ENCODE measurements at regions of chr10 and their contacts with region 1.

Region 1: DNA sequence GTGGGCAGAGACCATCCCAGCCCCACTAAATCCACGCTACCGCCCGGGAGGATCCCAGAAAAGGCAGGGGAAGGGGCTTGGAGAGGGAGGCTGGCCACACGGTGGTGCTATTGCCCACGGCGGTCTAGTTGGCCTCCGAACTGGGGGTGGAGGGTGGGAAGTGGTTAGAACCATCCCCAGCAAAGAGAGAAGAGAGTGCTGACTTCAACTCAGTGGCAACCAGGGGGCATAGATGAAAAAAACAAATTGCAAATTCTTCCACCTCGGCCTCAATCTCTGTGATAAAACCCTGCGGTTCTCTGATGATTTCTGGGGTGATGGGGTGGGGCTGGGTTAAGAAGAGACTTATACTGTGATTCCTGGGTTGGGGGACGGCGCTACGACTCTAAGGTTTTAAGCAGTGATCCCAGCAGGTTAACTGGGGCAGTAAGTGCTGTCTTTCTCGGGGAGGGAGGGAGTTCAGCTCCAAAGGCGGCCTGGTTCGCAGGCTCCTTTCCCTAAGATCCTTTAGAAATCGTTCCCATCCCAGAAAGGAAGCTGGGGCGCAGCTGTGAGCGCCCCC is 154.5 kb upstream of the LYZL2 start:
- DNase-seq: peak; percentile 80 to 83 (median 82)
- H3K4me3 ChIP-seq: peak overlapping the region; percentile 30 to 53
- H3K4me3 Mint-ChIP-seq: peak overlapping the region; percentile 74 to 92 (median 86)
- H3K27ac ChIP-seq: peak overlapping the region; percentile 12
- H3K27ac Mint-ChIP-seq: peak overlapping the region; percentile 28 to 95 (median 83)
- H3K4me1 ChIP-seq: peaks cover 28% of the 10 kb centered on the region
- H3K4me1 Mint-ChIP-seq: peaks cover 7 to 33% (median 20%) of the 10 kb centered on the region in 4 donors
- H3K27me3 ChIP-seq: no peaks in the 10 kb centered on the region
- H3K27me3 Mint-ChIP-seq: no peaks in the 10 kb centered on the region

Region 2: GRCh38 chr10:30476511-30477155 is 307.4 kb before region 1 on chr10:
- CTCF ChIA-PET with region 1: no interaction called
- POLR2A ChIA-PET with region 1: no interaction called
- intact Hi-C with region 1: no loop called
- DNase-seq: no peak
- H3K4me3 ChIP-seq: no peak overlapping the region
- H3K4me3 Mint-ChIP-seq: no peak overlapping the region
- H3K27ac ChIP-seq: no peak overlapping the region
- H3K27ac Mint-ChIP-seq: peak overlapping the region in 1 of 7 donors; percentile 48
- H3K4me1 ChIP-seq: no peaks in the 10 kb centered on the region
- H3K4me1 Mint-ChIP-seq: peaks cover 0 to 9% (median 6%) of the 10 kb centered on the region in 4 donors
- H3K27me3 ChIP-seq: no peaks in the 10 kb centered on the region
- H3K27me3 Mint-ChIP-seq: no peaks in the 10 kb centered on the region

Region 3: DNA sequence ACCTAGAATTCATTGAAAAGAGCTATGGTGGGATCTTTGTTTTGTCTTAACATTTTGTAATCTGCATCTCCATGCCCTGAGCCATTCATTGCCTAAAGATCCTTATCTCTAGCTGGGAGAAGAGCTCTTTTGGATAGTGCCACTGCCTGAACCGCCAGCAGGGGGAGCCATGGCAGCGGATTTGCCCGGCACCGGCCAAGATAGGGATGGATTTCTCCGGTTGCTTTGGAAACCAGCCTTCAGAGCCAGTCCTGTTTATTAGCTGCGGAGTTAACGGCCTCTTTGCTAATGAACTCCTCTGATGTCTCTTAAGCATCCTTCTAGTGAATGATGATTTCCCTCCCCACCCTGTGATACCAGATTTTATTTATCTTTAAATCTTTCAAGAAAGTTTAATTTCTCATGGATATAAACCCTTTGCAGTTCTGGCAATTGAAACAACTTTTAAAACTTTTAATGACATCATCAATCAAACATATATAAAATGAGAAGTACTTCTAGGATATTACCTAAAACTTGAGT is 96.3 kb before region 1 on chr10:
- CTCF ChIA-PET with region 1: interaction called, 11 read pairs
- POLR2A ChIA-PET with region 1: no interaction called
- intact Hi-C with region 1: no loop called
- DNase-seq: peak; percentile 59 to 76 (median 66)
- H3K4me3 ChIP-seq: no peak overlapping the region
- H3K4me3 Mint-ChIP-seq: no peak overlapping the region
- H3K27ac ChIP-seq: no peak overlapping the region
- H3K27ac Mint-ChIP-seq: peak overlapping the region in 1 of 7 donors; percentile 29
- H3K4me1 ChIP-seq: no peaks in the 10 kb centered on the region
- H3K4me1 Mint-ChIP-seq: peaks cover 0 to 3% (median 0%) of the 10 kb centered on the region in 4 donors
- H3K27me3 ChIP-seq: no peaks in the 10 kb centered on the region
- H3K27me3 Mint-ChIP-seq: peaks cover 9 to 29% of the 10 kb centered on the region in 2 donors

Region 4: DNA sequence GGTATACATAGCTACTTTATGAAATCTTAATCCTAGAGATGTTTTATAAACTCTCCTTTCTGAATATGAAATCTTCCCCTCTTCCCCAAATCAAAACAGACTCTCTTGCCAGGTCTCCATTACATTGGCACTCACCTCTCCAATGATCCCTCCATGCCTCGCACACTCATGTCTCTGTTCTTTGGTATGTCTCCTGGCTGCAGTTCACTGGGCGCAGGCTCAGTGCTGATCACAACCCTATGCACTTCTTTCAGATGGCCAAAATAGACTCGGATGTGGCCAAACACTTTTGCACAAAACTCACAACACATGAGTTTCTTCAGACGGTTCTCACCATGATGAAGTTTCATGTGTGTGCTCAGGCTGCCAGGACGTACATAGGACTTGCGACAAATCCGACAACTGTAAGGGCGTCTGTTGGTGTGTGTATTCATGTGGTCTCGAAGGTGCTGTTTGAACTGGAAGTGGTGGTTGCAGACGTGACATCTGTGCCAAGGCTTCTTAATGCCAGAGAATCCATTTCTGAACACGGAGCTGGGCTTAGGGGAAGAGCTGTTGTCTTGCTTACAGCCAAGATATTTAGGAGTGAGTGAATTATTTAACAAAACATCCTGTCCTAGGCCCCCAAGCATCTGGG is 64.5 kb after region 1 on chr10:
- CTCF ChIA-PET with region 1: interaction called, 30 read pairs
- POLR2A ChIA-PET with region 1: interaction called, 10 read pairs
- intact Hi-C with region 1: loop called (anchors 1 kb)
- DNase-seq: no peak
- H3K4me3 ChIP-seq: no peak overlapping the region
- H3K4me3 Mint-ChIP-seq: no peak overlapping the region
- H3K27ac ChIP-seq: no peak overlapping the region
- H3K27ac Mint-ChIP-seq: peak overlapping the region in 1 of 7 donors; percentile 73
- H3K4me1 ChIP-seq: no peaks in the 10 kb centered on the region
- H3K4me1 Mint-ChIP-seq: no peaks in the 10 kb centered on the region
- H3K27me3 ChIP-seq: no peaks in the 10 kb centered on the region
- H3K27me3 Mint-ChIP-seq: no peaks in the 10 kb centered on the region

Region 5: GRCh38 chr10:31031558-31032257 is 247.7 kb after region 1 on chr10 and contains the start of gene ZNF438:
- CTCF ChIA-PET with region 1: interaction called, 27 read pairs
- POLR2A ChIA-PET with region 1: interaction called, 40 read pairs
- intact Hi-C with region 1: loop called (anchors 1 kb)
- DNase-seq: peak in 4 of 5 donors; percentile 96 to 98 (median 96)
- H3K4me3 ChIP-seq: peak within 1 kb of the TSS; percentile 77 to 96
- H3K4me3 Mint-ChIP-seq: peak within 1 kb of the TSS; percentile 86 to 93 (median 90)
- H3K27ac ChIP-seq: peak within 1 kb of the TSS; percentile 92
- H3K27ac Mint-ChIP-seq: peak within 1 kb of the TSS; percentile 98 to 99 (median 99)
- H3K4me1 ChIP-seq: peaks cover 13% of the 10 kb centered on the region
- H3K4me1 Mint-ChIP-seq: peaks cover 9 to 25% (median 15%) of the 10 kb centered on the region in 4 donors
- H3K27me3 ChIP-seq: no peaks in the 10 kb centered on the region
- H3K27me3 Mint-ChIP-seq: no peaks in the 10 kb centered on the region
- total RNA-seq, gene ZNF438: 3.7 to 4.1 TPM

Region 6: GRCh38 chr10:31353574-31353973 is 569.6 kb after region 1 on chr10:
- CTCF ChIA-PET with region 1: interaction called, 3 read pairs
- POLR2A ChIA-PET with region 1: no interaction called
- intact Hi-C with region 1: loop called (anchors 1 kb)
- DNase-seq: peak; percentile 14 to 40 (median 21)
- H3K4me3 ChIP-seq: no peak overlapping the region
- H3K4me3 Mint-ChIP-seq: no peak overlapping the region
- H3K27ac ChIP-seq: no peak overlapping the region
- H3K27ac Mint-ChIP-seq: peak overlapping the region in 2 of 7 donors; percentile 2 to 30
- H3K4me1 ChIP-seq: peaks cover 37% of the 10 kb centered on the region
- H3K4me1 Mint-ChIP-seq: peaks cover 39 to 67% (median 51%) of the 10 kb centered on the region in 4 donors
- H3K27me3 ChIP-seq: no peaks in the 10 kb centered on the region
- H3K27me3 Mint-ChIP-seq: no peaks in the 10 kb centered on the region

Region 7: DNA sequence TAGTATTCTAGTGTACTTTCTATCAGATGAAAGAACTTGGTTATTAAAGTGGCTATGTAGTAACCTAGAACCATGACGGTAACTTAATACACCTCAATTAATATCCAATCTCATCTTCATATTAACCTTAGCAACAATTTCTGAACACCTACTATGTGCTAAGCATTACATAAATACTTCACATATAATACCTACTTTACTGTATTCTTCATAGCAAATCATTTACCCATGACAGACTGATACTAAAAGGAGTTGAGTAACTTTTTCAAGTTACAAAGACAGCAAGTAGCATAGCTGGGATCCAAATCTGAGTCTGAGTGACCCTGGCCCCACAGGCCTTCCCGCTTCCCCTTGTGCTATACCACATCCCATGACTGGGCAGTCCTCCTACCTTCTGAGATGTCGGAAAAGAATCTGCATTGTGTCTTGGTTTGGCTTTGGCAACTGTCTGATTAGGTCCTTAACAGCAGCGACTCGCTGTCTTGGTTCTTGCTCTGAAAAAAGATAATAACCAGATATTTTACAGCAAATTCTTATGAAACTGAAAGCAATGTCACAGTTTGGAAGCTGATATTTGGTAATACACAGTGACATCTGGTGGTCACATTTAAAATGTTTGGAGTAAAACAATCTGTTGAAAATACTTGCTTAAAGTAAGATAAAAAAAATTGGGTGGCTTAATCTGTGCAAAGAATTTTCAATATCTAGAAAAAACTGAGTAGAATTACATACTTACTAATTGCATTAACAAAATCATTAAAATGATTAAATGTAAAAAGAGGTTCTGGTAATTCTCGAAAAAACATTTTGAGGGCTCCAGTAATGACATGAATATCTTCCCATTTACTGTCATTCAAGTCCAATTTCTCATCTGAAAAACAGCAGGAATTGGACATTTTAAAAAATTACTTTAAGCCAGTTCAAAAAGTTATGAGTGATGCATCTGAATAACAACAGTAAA is 1024.5 kb after region 1 on chr10:
- CTCF ChIA-PET with region 1: interaction called, 17 read pairs
- POLR2A ChIA-PET with region 1: interaction called, 4 read pairs
- intact Hi-C with region 1: loop called (anchors 1 kb)
- DNase-seq: peak in 4 of 5 donors; percentile 44 to 50 (median 48)
- H3K4me3 ChIP-seq: no peak overlapping the region
- H3K4me3 Mint-ChIP-seq: peak overlapping the region in 4 of 8 donors; percentile 26 to 71 (median 56)
- H3K27ac ChIP-seq: no peak overlapping the region
- H3K27ac Mint-ChIP-seq: peak overlapping the region in 5 of 7 donors; percentile 71 to 94 (median 88)
- H3K4me1 ChIP-seq: peaks cover 4% of the 10 kb centered on the region
- H3K4me1 Mint-ChIP-seq: peaks cover 3 to 7% (median 4%) of the 10 kb centered on the region in 4 donors
- H3K27me3 ChIP-seq: no peaks in the 10 kb centered on the region
- H3K27me3 Mint-ChIP-seq: no peaks in the 10 kb centered on the region

Measured in CD4-positive, alpha-beta memory T cell (primary cell).